Naive thymus-derived CD4-positive, alpha-beta T cell (primary cell): ENCODE measurements at regions of chr4 and their contacts with region 1.

Region 1: GRCh38 chr4:140373328-140374129 is at the start of gene SCOC:
- DNase-seq: peak; percentile 80 to 98 (median 95)
- ATAC-seq: peak; percentile 98
- H3K4me3 ChIP-seq: peak within 1 kb of the TSS; percentile 79
- H3K4me3 Mint-ChIP-seq: peak within 1 kb of the TSS in 2 of 10 donors; percentile 87 to 90
- H3K27ac ChIP-seq: peak within 1 kb of the TSS; percentile 86
- H3K27ac Mint-ChIP-seq: peak within 1 kb of the TSS in 5 of 9 donors; percentile 47 to 90 (median 51)
- H3K4me1 ChIP-seq: peaks cover 6 to 7% of the 10 kb centered on the region in 2 donors
- H3K4me1 Mint-ChIP-seq: peaks cover 29 to 49% (median 43%) of the 10 kb centered on the region in 7 donors
- H3K27me3 ChIP-seq: no peaks in the 10 kb centered on the region
- H3K27me3 Mint-ChIP-seq: peaks cover 0 to 17% (median 0%) of the 10 kb centered on the region in 5 donors
- total RNA-seq, gene SCOC: 9.3 to 26.3 (median 22.6) TPM

Region 2: GRCh38 chr4:139015269-139015947 is 1358.1 kb before region 1 on chr4 and contains the start of gene NOCT:
- CTCF ChIA-PET with region 1: no interaction called
- POLR2A ChIA-PET with region 1: no interaction called
- intact Hi-C with region 1: loop called (anchors 1 to 10 kb)
- DNase-seq: peak; percentile 82 to 92 (median 89)
- ATAC-seq: peak; percentile 94
- H3K4me3 ChIP-seq: peak within 1 kb of the TSS; percentile 65
- H3K4me3 Mint-ChIP-seq: peak within 1 kb of the TSS; percentile 82 to 93 (median 88)
- H3K27ac ChIP-seq: peak within 1 kb of the TSS; percentile 91
- H3K27ac Mint-ChIP-seq: peak within 1 kb of the TSS; percentile 76 to 99 (median 94)
- H3K4me1 ChIP-seq: peaks cover 7 to 10% of the 10 kb centered on the region in 2 donors
- H3K4me1 Mint-ChIP-seq: peaks cover 14 to 44% (median 24%) of the 10 kb centered on the region in 7 donors
- H3K27me3 ChIP-seq: no peaks in the 10 kb centered on the region
- H3K27me3 Mint-ChIP-seq: no peaks in the 10 kb centered on the region
- total RNA-seq, gene NOCT: 1.6 to 33.7 (median 8.8) TPM

Region 3: GRCh38 chr4:139083956-139084803 is 1289.3 kb before region 1 on chr4:
- CTCF ChIA-PET with region 1: no interaction called
- POLR2A ChIA-PET with region 1: no interaction called
- intact Hi-C with region 1: loop called in 1 of 2 experiments (anchors 1 kb)
- DNase-seq: peak; percentile 54 to 88 (median 84)
- ATAC-seq: peak; percentile 64
- H3K4me3 ChIP-seq: peak overlapping the region; percentile 99
- H3K4me3 Mint-ChIP-seq: peak overlapping the region; percentile 90 to 100 (median 92)
- H3K27ac ChIP-seq: peak overlapping the region; percentile 96
- H3K27ac Mint-ChIP-seq: peak overlapping the region; percentile 85 to 100 (median 96)
- H3K4me1 ChIP-seq: peaks cover 16 to 27% of the 10 kb centered on the region in 2 donors
- H3K4me1 Mint-ChIP-seq: peaks cover 16 to 49% (median 41%) of the 10 kb centered on the region in 7 donors
- H3K27me3 ChIP-seq: no peaks in the 10 kb centered on the region
- H3K27me3 Mint-ChIP-seq: no peaks in the 10 kb centered on the region

Region 4: GRCh38 chr4:139188648-139189416 is 1184.7 kb before region 1 on chr4:
- CTCF ChIA-PET with region 1: no interaction called
- POLR2A ChIA-PET with region 1: no interaction called
- intact Hi-C with region 1: no loop called
- DNase-seq: no peak
- ATAC-seq: peak; percentile 89
- H3K4me3 ChIP-seq: no peak overlapping the region
- H3K4me3 Mint-ChIP-seq: no peak overlapping the region
- H3K27ac ChIP-seq: no peak overlapping the region
- H3K27ac Mint-ChIP-seq: no peak overlapping the region
- H3K4me1 ChIP-seq: no peaks in the 10 kb centered on the region
- H3K4me1 Mint-ChIP-seq: peaks cover 0 to 5% (median 0%) of the 10 kb centered on the region in 7 donors
- H3K27me3 ChIP-seq: no peaks in the 10 kb centered on the region
- H3K27me3 Mint-ChIP-seq: peaks cover 0 to 6% (median under 1%) of the 10 kb centered on the region in 5 donors

Region 5: DNA sequence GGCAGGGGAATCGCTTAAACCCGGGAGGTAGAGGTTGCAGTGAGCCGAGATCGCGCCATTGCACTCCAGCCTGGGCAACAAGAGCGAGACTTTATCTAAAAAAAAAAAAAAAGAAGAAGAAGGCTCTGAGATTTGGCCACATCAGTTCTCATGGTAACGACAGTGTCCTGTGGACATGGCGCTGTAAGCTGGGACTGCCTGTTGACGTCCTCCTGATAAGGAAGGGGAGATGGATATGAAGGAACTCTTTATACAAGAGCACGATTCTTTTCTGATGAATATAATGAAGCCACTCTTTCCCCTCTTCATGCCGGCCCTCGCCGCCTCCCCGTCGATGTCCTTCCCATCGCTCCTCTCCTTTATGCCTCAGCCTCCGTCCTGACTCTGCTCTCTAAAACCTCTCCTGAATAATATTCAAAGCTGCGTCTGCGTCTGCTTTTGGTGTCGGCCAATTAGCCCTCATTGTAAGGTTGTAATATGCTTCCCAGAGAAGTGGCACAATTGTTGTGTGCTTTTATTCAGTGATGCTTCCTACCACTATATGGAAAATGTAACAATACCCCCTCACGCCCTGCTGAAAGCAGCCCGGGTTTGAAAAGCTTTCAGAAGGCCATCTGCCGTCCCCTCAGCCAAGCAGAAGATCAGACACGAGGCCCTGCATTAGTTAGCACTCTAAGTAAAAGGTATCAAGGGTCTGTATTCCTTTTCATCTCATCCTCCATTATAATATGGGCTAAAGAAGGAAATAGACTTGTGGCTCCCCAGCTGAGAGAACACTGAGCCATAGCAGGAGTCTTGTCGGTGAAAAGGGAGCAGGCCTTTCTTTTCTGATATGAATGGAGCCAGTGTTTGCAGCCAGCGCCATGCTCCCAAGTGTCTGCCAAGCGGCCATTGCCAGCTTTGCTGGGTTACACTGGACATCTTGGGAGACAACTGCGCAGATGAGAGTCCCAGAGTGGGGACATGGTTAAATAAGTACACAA is 22.1 kb before region 1 on chr4:
- CTCF ChIA-PET with region 1: interaction called, 3 read pairs
- POLR2A ChIA-PET with region 1: interaction called, 12 read pairs
- intact Hi-C with region 1: no loop called
- DNase-seq: no peak
- ATAC-seq: no peak
- H3K4me3 ChIP-seq: no peak overlapping the region
- H3K4me3 Mint-ChIP-seq: no peak overlapping the region
- H3K27ac ChIP-seq: no peak overlapping the region
- H3K27ac Mint-ChIP-seq: peak overlapping the region in 2 of 9 donors; percentile 22 to 38
- H3K4me1 ChIP-seq: peaks cover 5 to 7% of the 10 kb centered on the region in 2 donors
- H3K4me1 Mint-ChIP-seq: peaks cover 5 to 28% (median 20%) of the 10 kb centered on the region in 7 donors
- H3K27me3 ChIP-seq: no peaks in the 10 kb centered on the region
- H3K27me3 Mint-ChIP-seq: peaks cover 0 to 22% (median 5%) of the 10 kb centered on the region in 5 donors

Region 6: DNA sequence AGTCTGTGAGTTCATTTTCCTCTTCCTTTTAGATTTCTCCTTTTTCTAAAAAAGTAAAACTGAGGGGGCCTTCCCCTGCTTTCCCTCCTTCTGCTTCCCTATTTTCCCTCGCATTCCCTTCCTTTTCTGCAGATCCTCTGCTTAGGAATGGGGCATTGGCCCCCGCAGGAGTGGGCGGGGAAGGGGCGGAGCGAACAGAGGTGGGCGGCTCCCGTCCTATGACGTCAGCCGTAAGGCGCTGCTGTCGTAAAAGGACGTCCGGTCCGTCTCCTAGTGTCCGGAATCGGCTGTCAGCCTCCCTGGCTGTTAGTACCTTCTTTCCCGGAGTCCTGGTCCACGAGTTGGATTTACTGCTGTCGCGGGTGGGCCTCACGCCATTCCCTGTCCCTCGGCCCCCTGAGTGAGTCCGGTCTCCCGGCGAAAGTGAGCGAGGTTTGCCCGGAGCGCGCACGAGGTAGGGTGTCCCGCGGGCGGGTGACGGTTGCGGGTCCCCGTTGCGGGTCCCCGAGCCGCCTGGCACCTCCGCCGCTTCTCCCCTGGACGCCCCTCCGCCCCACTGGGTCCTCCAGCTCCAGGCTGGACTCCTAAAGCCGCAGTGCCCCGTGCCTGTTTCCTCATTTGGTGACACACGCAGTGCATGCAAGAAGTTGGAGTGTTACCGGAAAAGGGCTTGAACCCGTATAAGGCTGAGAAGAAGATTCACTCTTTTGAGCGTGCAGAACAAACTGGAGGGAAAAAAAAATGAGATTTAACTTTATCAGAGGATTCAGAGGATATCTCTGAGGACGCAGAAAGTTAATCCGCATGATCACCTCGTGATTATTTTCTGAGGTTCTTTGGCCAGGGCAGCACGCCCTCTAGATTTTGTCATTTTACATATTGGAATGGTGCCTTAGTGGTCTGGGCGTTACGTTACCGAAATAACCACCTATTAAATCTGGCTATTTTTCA is 847.4 kb after region 1 on chr4 and contains the start of gene ZNF330:
- CTCF ChIA-PET with region 1: no interaction called
- POLR2A ChIA-PET with region 1: no interaction called
- intact Hi-C with region 1: loop called (anchors 2 to 10 kb)
- DNase-seq: peak; percentile 80 to 97 (median 90)
- ATAC-seq: peak; percentile 97
- H3K4me3 ChIP-seq: peak within 1 kb of the TSS; percentile 94
- H3K4me3 Mint-ChIP-seq: peak within 1 kb of the TSS; percentile 91 to 99 (median 94)
- H3K27ac ChIP-seq: peak within 1 kb of the TSS; percentile 93
- H3K27ac Mint-ChIP-seq: peak within 1 kb of the TSS; percentile 91 to 97 (median 96)
- H3K4me1 ChIP-seq: peaks cover 9 to 13% of the 10 kb centered on the region in 2 donors
- H3K4me1 Mint-ChIP-seq: peaks cover 24 to 58% (median 52%) of the 10 kb centered on the region in 7 donors
- H3K27me3 ChIP-seq: no peaks in the 10 kb centered on the region
- H3K27me3 Mint-ChIP-seq: peaks cover 0 to 18% (median 6%) of the 10 kb centered on the region in 5 donors
- total RNA-seq, gene ZNF330: 31.7 to 44.7 (median 41.0) TPM